CD4-positive, alpha-beta T cell (primary cell): ENCODE measurements at regions of chr1 and their contacts with region 1.

Region 1: DNA sequence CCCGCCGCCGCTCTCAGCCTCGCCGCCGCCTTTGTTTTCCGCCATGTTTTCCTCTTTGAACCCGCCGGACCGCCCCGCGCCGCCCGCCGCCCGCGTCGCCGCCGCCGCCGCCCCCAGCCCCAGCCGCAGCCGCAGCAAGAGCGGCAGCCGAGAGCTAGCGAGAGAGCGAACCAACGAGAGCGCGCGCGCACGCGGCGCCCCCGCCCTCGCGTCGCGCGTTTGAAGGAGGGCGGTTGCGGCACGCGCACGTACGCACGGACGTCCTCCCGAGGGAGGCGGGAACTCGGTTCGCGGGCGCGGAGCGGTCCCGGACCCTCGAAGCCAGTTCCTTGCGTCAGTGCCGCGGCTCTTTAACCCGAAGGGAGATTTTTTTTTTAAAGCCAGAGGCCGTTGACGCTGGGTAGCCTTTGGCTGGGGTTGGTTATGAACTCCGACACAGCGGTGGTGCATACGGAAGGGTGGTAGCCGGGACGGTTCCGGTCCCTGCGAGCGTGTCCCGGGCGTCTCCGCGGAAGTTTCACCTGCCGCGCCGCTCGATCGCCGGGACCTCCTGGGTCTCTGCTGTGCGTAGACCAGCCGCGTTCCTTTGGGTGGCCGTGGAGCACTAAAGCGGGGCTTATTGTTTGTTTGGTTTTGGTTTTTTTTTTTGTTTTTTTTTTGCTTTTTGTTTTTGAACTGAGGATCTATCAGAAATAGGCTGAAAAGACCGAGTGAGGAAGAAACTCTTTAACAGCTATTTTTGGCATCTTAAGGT is at the start of gene TRIM33:
- DNase-seq: peak; percentile 84 to 98 (median 90)
- ATAC-seq: peak; percentile 66
- H3K4me3 ChIP-seq: peak within 1 kb of the TSS; percentile 86
- H3K4me3 Mint-ChIP-seq: peak within 1 kb of the TSS; percentile 100
- H3K27ac ChIP-seq: peak within 1 kb of the TSS; percentile 95 to 99
- H3K27ac Mint-ChIP-seq: peak within 1 kb of the TSS; percentile 100
- H3K4me1 ChIP-seq: peaks cover 43% of the 10 kb centered on the region
- H3K4me1 Mint-ChIP-seq: peaks cover 48% of the 10 kb centered on the region
- H3K27me3 ChIP-seq: no peaks in the 10 kb centered on the region
- H3K27me3 Mint-ChIP-seq: no peaks in the 10 kb centered on the region
- CTCF ChIP-seq: no peak
- total RNA-seq, gene TRIM33: 42.6 to 45.0 TPM

Region 2: GRCh38 chr1:113818578-113818977 is 692.6 kb before region 1 on chr1:
- CTCF ChIA-PET with region 1: no interaction called
- POLR2A ChIA-PET with region 1: no interaction called
- intact Hi-C with region 1: loop called in 1 of 2 experiments (anchors 5 kb)
- DNase-seq: no peak
- ATAC-seq: no peak
- H3K4me3 ChIP-seq: no peak overlapping the region
- H3K4me3 Mint-ChIP-seq: no peak overlapping the region
- H3K27ac ChIP-seq: no peak overlapping the region
- H3K27ac Mint-ChIP-seq: no peak overlapping the region
- H3K4me1 ChIP-seq: no peaks in the 10 kb centered on the region
- H3K4me1 Mint-ChIP-seq: no peaks in the 10 kb centered on the region
- H3K27me3 ChIP-seq: no peaks in the 10 kb centered on the region
- H3K27me3 Mint-ChIP-seq: no peaks in the 10 kb centered on the region
- CTCF ChIP-seq: no peak

Region 3: DNA sequence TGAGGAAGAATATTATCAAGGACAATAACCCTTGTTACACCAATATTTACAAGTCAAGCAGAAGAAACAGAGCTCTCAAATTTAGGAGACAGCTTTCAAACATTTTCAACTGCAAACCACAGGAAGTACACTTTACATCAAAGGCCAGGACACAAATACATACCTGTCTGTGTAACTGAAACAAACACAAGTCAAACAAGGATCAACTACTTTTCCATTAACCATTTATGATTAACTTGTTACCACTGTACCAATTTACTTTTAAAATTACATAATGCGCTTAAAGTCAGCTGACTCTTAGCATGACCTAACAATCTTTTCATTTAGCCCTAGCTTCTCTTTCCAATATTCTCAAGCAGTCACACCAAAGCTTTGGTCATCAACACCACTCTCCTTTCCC is 43.7 kb before region 1 on chr1:
- CTCF ChIA-PET with region 1: no interaction called
- POLR2A ChIA-PET with region 1: interaction called, 17 read pairs
- intact Hi-C with region 1: loop called in 1 of 2 experiments (anchors 5 kb)
- DNase-seq: peak in 2 of 14 experiments; percentile 20 to 54
- ATAC-seq: peak; percentile 57
- H3K4me3 ChIP-seq: no peak overlapping the region
- H3K4me3 Mint-ChIP-seq: peak overlapping the region; percentile 68
- H3K27ac ChIP-seq: no peak overlapping the region
- H3K27ac Mint-ChIP-seq: peak overlapping the region; percentile 43
- H3K4me1 ChIP-seq: peaks cover 25% of the 10 kb centered on the region
- H3K4me1 Mint-ChIP-seq: peaks cover 69% of the 10 kb centered on the region
- H3K27me3 ChIP-seq: no peaks in the 10 kb centered on the region
- H3K27me3 Mint-ChIP-seq: no peaks in the 10 kb centered on the region
- CTCF ChIP-seq: no peak

Region 4: GRCh38 chr1:114670083-114671010 is 159.1 kb after region 1 on chr1:
- CTCF ChIA-PET with region 1: no interaction called
- POLR2A ChIA-PET with region 1: interaction called, 10 read pairs
- intact Hi-C with region 1: loop called in 1 of 2 experiments (anchors 2 kb)
- DNase-seq: peak; percentile 74 to 93 (median 84)
- ATAC-seq: peak; percentile 94
- H3K4me3 ChIP-seq: peak overlapping the region; percentile 81
- H3K4me3 Mint-ChIP-seq: peak overlapping the region; percentile 99
- H3K27ac ChIP-seq: no peak overlapping the region
- H3K27ac Mint-ChIP-seq: peak overlapping the region; percentile 77
- H3K4me1 ChIP-seq: peaks cover 14% of the 10 kb centered on the region
- H3K4me1 Mint-ChIP-seq: peaks cover 12% of the 10 kb centered on the region
- H3K27me3 ChIP-seq: peaks cover 5 to 8% of the 10 kb centered on the region in 2 experiments
- H3K27me3 Mint-ChIP-seq: peaks cover 28% of the 10 kb centered on the region
- CTCF ChIP-seq: no peak

Region 5: GRCh38 chr1:114757455-114758250 is 246.4 kb after region 1 on chr1 and contains the start of gene CSDE1:
- CTCF ChIA-PET with region 1: interaction called, 3 read pairs
- POLR2A ChIA-PET with region 1: interaction called, 12 read pairs
- intact Hi-C with region 1: loop called (anchors 1 to 2 kb)
- DNase-seq: peak; percentile 94 to 99 (median 96)
- ATAC-seq: peak; percentile 81
- H3K4me3 ChIP-seq: peak within 1 kb of the TSS; percentile 84
- H3K4me3 Mint-ChIP-seq: peak within 1 kb of the TSS; percentile 99
- H3K27ac ChIP-seq: peak within 1 kb of the TSS; percentile 99 to 100
- H3K27ac Mint-ChIP-seq: peak within 1 kb of the TSS; percentile 98
- H3K4me1 ChIP-seq: peaks cover 26% of the 10 kb centered on the region
- H3K4me1 Mint-ChIP-seq: peaks cover 58% of the 10 kb centered on the region
- H3K27me3 ChIP-seq: no peaks in the 10 kb centered on the region
- H3K27me3 Mint-ChIP-seq: no peaks in the 10 kb centered on the region
- CTCF ChIP-seq: no peak
- total RNA-seq, gene CSDE1: 725 to 731 TPM